ENCODE measurements at regions of chr3 and their contacts with region 1.

Region 1: DNA sequence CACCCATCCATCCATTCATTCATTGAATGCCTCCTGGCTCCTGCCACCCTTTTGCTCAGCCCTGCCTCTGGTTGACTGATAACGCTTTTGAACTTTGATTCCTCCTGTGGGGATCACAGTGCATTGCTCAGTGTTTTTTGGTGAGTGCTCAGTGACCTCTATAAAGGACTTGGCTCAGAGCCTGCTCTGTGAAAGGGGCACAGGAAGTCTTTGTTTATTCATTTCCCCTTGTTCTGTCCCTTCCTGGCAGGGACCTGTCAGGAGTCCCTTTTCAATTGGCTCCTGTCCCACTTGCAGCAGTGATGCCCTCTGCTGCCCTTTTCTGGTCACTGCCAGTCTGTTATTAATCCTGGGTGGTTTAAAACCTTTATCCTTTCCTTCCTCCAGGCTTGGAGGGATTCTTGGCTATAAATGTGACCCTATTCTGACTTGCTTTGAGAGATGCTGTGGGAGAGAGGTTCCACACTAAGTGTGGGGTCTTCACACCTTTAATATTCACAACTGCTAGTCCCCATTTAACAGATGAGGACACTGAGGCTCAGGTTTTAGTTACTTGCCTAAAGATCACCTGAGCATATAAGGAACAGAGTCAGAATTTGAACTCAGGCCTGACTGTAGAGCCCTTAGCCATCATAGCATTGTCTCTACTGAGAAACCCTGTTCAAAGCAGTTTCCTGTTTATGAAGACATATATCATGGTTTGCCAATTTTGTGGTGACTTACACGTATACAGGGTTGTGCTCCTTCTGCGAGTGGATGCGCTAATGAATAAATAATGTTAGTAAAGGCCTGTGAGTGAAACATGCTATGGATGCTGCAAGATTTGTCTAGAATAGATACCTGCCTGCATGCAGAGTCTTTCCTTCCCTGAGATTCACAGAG is 23.2 kb upstream of the TATDN2 start:
- DNase-seq: peak; percentile 25 to 65 (median 57)
- ATAC-seq: peak; percentile 73
- H3K4me3 ChIP-seq: no peak overlapping the region
- H3K4me3 Mint-ChIP-seq: peak overlapping the region; percentile 0 to 85 (median 37)
- H3K27ac ChIP-seq: no peak overlapping the region
- H3K27ac Mint-ChIP-seq: peak overlapping the region; percentile 60 to 93 (median 86)
- H3K4me1 ChIP-seq: peaks cover 30 to 31% of the 10 kb centered on the region in 2 donors
- H3K4me1 Mint-ChIP-seq: peaks cover 37 to 76% (median 50%) of the 10 kb centered on the region in 7 donors
- H3K27me3 ChIP-seq: no peaks in the 10 kb centered on the region
- H3K27me3 Mint-ChIP-seq: no peaks in the 10 kb centered on the region

Region 2: GRCh38 chr3:9779721-9780457 is 445.1 kb before region 1 on chr3:
- CTCF ChIA-PET with region 1: no interaction called
- POLR2A ChIA-PET with region 1: no interaction called
- intact Hi-C with region 1: loop called in 1 of 2 experiments (anchors 1 kb)
- DNase-seq: peak in 7 of 9 donors; percentile 21 to 48 (median 38)
- ATAC-seq: peak; percentile 80
- H3K4me3 ChIP-seq: peak overlapping the region; percentile 23
- H3K4me3 Mint-ChIP-seq: peak overlapping the region; percentile 41 to 82 (median 72)
- H3K27ac ChIP-seq: peak overlapping the region; percentile 5
- H3K27ac Mint-ChIP-seq: peak overlapping the region; percentile 1 to 90 (median 72)
- H3K4me1 ChIP-seq: peaks cover 33 to 39% of the 10 kb centered on the region in 2 donors
- H3K4me1 Mint-ChIP-seq: peaks cover 43 to 63% (median 57%) of the 10 kb centered on the region in 7 donors
- H3K27me3 ChIP-seq: no peaks in the 10 kb centered on the region
- H3K27me3 Mint-ChIP-seq: no peaks in the 10 kb centered on the region

Region 3: GRCh38 chr3:9986237-9986725 is 238.7 kb before region 1 on chr3:
- CTCF ChIA-PET with region 1: no interaction called
- POLR2A ChIA-PET with region 1: no interaction called
- intact Hi-C with region 1: loop called in 1 of 2 experiments (anchors 2 kb)
- DNase-seq: no peak
- ATAC-seq: peak; percentile 52
- H3K4me3 ChIP-seq: peak overlapping the region; percentile 100
- H3K4me3 Mint-ChIP-seq: peak overlapping the region; percentile 95 to 99 (median 98)
- H3K27ac ChIP-seq: peak overlapping the region; percentile 96
- H3K27ac Mint-ChIP-seq: peak overlapping the region; percentile 95 to 100 (median 98)
- H3K4me1 ChIP-seq: peaks cover 13 to 15% of the 10 kb centered on the region in 2 donors
- H3K4me1 Mint-ChIP-seq: peaks cover 0 to 48% (median 35%) of the 10 kb centered on the region in 7 donors
- H3K27me3 ChIP-seq: no peaks in the 10 kb centered on the region
- H3K27me3 Mint-ChIP-seq: no peaks in the 10 kb centered on the region

Region 4: GRCh38 chr3:10115326-10116137 is 109.5 kb before region 1 on chr3 and contains the start of gene BRK1:
- CTCF ChIA-PET with region 1: no interaction called
- POLR2A ChIA-PET with region 1: no interaction called
- intact Hi-C with region 1: loop called (anchors 1 kb)
- DNase-seq: peak; percentile 73 to 94 (median 91)
- ATAC-seq: peak; percentile 99
- H3K4me3 ChIP-seq: peak within 1 kb of the TSS; percentile 83
- H3K4me3 Mint-ChIP-seq: peak within 1 kb of the TSS; percentile 91 to 100 (median 98)
- H3K27ac ChIP-seq: peak within 1 kb of the TSS; percentile 85
- H3K27ac Mint-ChIP-seq: peak within 1 kb of the TSS; percentile 92 to 99 (median 98)
- H3K4me1 ChIP-seq: peaks cover 11 to 13% of the 10 kb centered on the region in 2 donors
- H3K4me1 Mint-ChIP-seq: peaks cover 23 to 48% (median 40%) of the 10 kb centered on the region in 7 donors
- H3K27me3 ChIP-seq: no peaks in the 10 kb centered on the region
- H3K27me3 Mint-ChIP-seq: peaks cover 0 to 2% (median 0%) of the 10 kb centered on the region in 5 donors
- total RNA-seq, gene BRK1: 40.9 to 117 (median 65.8) TPM

Region 5: DNA sequence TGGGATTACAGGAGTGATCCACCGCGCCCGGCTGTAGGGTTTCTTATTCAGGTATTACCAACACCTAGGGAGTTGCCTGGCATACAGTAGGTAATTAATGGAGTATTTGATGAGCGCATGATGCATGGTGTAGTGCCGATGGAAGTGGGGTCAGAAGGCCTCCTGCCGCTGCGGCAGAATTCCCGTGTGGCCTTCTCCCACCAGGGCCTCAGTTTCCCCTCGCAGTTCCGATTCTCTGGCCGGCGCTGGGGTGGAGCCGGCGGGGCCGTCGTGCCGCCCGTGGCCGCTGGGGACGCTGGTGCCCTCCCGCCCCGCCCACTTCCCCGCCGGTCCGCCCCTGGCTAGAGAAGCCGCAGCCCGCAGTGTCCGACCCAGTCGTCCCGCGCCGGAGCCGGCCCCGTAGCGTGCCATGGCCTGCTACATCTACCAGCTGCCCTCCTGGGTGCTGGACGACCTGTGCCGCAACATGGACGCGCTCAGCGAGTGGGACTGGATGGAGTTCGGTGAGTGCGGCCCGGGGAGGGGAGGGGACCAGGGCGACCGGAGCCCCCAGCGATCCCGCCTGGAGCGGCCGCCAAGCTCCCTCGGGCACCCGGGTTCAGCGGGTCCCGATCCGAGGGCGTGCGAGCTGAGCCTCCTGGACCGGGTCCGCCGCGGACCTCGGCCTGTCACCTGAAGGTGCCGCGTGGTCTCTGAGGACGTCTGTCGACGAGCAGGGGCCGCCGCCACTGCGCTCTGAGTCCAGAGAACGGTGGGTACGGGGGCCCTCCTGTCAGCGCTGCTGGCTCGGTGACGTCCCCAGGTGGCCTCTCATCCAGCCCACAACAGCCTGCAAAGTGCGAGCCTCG is 60.3 kb before region 1 on chr3 and contains the start of gene IRAK2:
- CTCF ChIA-PET with region 1: interaction called, 3 read pairs
- POLR2A ChIA-PET with region 1: interaction called, 3 read pairs
- intact Hi-C with region 1: loop called (anchors 1 kb)
- DNase-seq: peak; percentile 25 to 75 (median 57)
- ATAC-seq: peak; percentile 92
- H3K4me3 ChIP-seq: peak within 1 kb of the TSS; percentile 85
- H3K4me3 Mint-ChIP-seq: peak within 1 kb of the TSS; percentile 79 to 94 (median 86)
- H3K27ac ChIP-seq: peak within 1 kb of the TSS; percentile 68
- H3K27ac Mint-ChIP-seq: peak within 1 kb of the TSS; percentile 2 to 89 (median 68)
- H3K4me1 ChIP-seq: peaks cover 5 to 9% of the 10 kb centered on the region in 2 donors
- H3K4me1 Mint-ChIP-seq: peaks cover 12 to 37% (median 25%) of the 10 kb centered on the region in 7 donors
- H3K27me3 ChIP-seq: no peaks in the 10 kb centered on the region
- H3K27me3 Mint-ChIP-seq: no peaks in the 10 kb centered on the region
- total RNA-seq, gene IRAK2: 1.5 to 4.8 (median 2.3) TPM

Region 6: GRCh38 chr3:10198761-10199649 is 26.0 kb before region 1 on chr3:
- CTCF ChIA-PET with region 1: interaction called, 7 read pairs
- POLR2A ChIA-PET with region 1: interaction called, 6 read pairs
- intact Hi-C with region 1: loop called in 1 of 2 experiments (anchors 1 kb)
- DNase-seq: peak; percentile 33 to 84 (median 67)
- ATAC-seq: peak; percentile 86
- H3K4me3 ChIP-seq: no peak overlapping the region
- H3K4me3 Mint-ChIP-seq: peak overlapping the region; percentile 66 to 80 (median 73)
- H3K27ac ChIP-seq: peak overlapping the region; percentile 89
- H3K27ac Mint-ChIP-seq: peak overlapping the region; percentile 84 to 99 (median 93)
- H3K4me1 ChIP-seq: peaks cover 46 to 57% of the 10 kb centered on the region in 2 donors
- H3K4me1 Mint-ChIP-seq: peaks cover 45 to 86% (median 72%) of the 10 kb centered on the region in 7 donors
- H3K27me3 ChIP-seq: no peaks in the 10 kb centered on the region
- H3K27me3 Mint-ChIP-seq: no peaks in the 10 kb centered on the region

Region 7: DNA sequence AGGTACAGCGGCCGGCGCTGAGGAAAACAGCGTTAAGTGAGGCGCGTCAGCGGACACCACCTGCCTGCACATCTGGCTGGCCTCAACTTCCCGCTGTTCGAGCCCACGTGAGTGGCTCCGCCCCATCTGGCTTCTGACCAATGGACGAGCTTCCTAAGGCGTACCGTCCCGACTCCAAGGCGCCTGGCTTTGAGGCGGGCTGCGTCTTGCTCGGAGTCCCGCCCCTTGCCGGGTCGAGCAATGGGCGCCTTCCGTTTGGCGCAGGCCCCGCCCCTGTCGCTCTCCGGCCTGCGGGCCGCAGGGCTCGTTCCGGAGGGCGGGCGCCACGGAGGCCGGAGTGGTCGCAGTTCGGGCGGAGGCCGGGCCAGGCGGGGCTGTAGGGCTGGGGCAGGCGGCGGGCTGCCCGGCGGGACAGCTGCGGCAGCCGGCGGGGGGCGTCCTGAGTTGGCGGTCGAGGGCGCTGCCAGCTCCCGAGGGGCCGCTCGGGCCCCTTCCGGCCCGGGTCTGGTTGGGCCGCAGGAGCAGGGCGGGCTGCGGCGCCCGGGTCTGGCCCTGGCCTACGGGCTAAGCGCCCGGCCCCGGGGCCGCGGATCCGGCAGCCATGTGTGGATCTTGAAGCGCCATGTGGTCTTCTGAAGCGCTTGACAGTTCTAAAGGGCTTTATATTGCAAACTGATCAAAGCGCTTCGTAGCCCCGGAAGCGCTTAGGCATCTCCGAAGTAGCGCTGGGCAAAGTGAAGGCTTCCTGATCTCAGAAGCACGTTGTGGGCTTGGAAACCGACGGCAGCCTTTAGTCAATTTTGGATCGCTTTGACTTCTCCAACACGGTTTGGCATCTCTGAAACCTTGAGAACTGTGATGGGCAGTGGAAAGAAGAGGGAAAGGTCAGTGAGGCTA is 23.4 kb after region 1 on chr3 and contains the start of gene TATDN2:
- CTCF ChIA-PET with region 1: interaction called, 3 read pairs
- POLR2A ChIA-PET with region 1: interaction called, 3 read pairs
- intact Hi-C with region 1: loop called in 1 of 2 experiments (anchors 1 kb)
- DNase-seq: peak; percentile 80 to 91 (median 88)
- ATAC-seq: peak; percentile 98
- H3K4me3 ChIP-seq: peak within 1 kb of the TSS; percentile 99
- H3K4me3 Mint-ChIP-seq: peak within 1 kb of the TSS; percentile 96 to 100 (median 99)
- H3K27ac ChIP-seq: peak within 1 kb of the TSS; percentile 80
- H3K27ac Mint-ChIP-seq: peak within 1 kb of the TSS; percentile 91 to 97 (median 95)
- H3K4me1 ChIP-seq: peaks cover 28 to 30% of the 10 kb centered on the region in 2 donors
- H3K4me1 Mint-ChIP-seq: peaks cover 44 to 63% (median 52%) of the 10 kb centered on the region in 7 donors
- H3K27me3 ChIP-seq: no peaks in the 10 kb centered on the region
- H3K27me3 Mint-ChIP-seq: no peaks in the 10 kb centered on the region
- total RNA-seq, gene TATDN2: 52.9 to 88.8 (median 71.6) TPM